ENCODE measurements at regions of chr4 and their contacts with region 1.

Region 1: GRCh38 chr4:74682567-74683359 is 111.6 kb downstream of the BTC start:
- DNase-seq: peak; percentile 96
- H3K4me3 ChIP-seq: no peak overlapping the region
- H3K27ac ChIP-seq: peak overlapping the region; percentile 54
- H3K4me1 ChIP-seq: peaks cover 15% of the 10 kb centered on the region
- H3K27me3 ChIP-seq: no peaks in the 10 kb centered on the region
- CTCF ChIP-seq: no peak

Region 2: DNA sequence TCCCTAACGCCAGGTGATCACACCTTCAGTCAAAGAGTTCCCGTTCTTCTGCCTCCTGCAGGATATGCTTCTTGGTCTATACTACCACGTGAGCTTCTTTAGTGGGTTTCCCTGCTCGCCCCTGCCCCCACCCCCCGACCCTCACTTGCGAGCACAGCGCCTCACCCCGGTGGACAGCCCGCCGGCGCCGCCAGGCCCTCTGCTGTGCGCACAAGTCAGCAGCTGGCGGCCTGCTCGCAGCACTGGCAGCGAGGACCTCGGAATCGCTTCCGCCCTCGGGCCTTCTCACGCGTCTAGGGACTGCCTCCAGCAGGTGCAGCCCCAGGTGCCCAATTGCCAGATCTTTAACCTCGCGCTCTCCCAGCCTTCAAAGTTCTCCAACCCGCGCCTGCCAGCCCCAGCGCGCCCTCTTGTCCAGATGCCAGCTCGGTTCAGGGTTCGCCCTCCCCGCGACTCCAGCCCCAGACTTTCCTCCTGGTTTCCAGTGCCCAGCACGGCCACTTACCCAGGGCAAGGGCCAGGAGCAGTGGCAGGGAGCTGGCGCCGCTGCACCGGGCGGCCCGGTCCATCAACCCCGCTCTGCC is 111.1 kb after region 1 on chr4:
- CTCF ChIA-PET with region 1: no interaction called
- dilution Hi-C with region 1: no loop called
- in situ Hi-C with region 1: no loop called
- intact Hi-C with region 1: loop called (anchors 2 kb)
- DNase-seq: peak; percentile 44
- H3K4me3 ChIP-seq: peak overlapping the region; percentile 68 to 84 (median 71)
- H3K27ac ChIP-seq: peak overlapping the region; percentile 37
- H3K4me1 ChIP-seq: peaks cover 12% of the 10 kb centered on the region
- H3K27me3 ChIP-seq: no peaks in the 10 kb centered on the region
- CTCF ChIP-seq: peak; percentile 24 to 59

Region 3: DNA sequence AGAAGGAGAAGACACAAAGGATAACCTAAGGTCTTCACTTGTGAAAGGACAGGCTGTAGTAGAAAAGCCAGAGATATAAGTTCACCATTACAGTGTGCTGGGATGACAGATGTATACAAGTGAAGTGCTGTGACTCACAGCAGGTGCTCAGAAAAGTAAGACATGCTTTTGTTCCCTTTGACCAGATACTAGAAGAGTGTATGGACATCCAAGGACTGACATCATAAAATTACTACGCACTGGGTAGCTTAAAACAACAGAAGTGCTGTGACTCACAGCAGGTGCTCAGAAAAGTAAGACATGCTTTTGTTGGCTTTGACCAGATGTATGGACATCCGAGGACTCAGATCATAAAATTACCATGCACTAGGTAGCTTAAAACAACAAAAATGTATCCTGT is 173.1 kb after region 1 on chr4:
- CTCF ChIA-PET with region 1: no interaction called
- dilution Hi-C with region 1: no loop called
- in situ Hi-C with region 1: no loop called
- intact Hi-C with region 1: no loop called
- DNase-seq: peak; percentile 85
- H3K4me3 ChIP-seq: no peak overlapping the region
- H3K27ac ChIP-seq: no peak overlapping the region
- H3K4me1 ChIP-seq: no peaks in the 10 kb centered on the region
- H3K27me3 ChIP-seq: peaks cover 6% of the 10 kb centered on the region
- CTCF ChIP-seq: no peak